ENCODE measurements at regions of chrX and their contacts with region 1.

Region 1: GRCh38 chrX:49291615-49292337 is 11.7 kb upstream of the GAGE10 start:
- DNase-seq: peak; percentile 79
- H3K4me3 Mint-ChIP-seq: no peak overlapping the region
- H3K27ac Mint-ChIP-seq: no peak overlapping the region
- H3K4me1 Mint-ChIP-seq: peaks cover 32% of the 10 kb centered on the region
- H3K27me3 Mint-ChIP-seq: no peaks in the 10 kb centered on the region

Region 2: GRCh38 chrX:49230469-49231232 is 61.1 kb before region 1 on chrX:
- CTCF ChIA-PET with region 1: no interaction called
- POLR2A ChIA-PET with region 1: no interaction called
- intact Hi-C with region 1: no loop called
- DNase-seq: peak; percentile 81
- H3K4me3 Mint-ChIP-seq: peak overlapping the region; percentile 69
- H3K27ac Mint-ChIP-seq: peak overlapping the region; percentile 75
- H3K4me1 Mint-ChIP-seq: peaks cover 14% of the 10 kb centered on the region
- H3K27me3 Mint-ChIP-seq: no peaks in the 10 kb centered on the region

Region 3: DNA sequence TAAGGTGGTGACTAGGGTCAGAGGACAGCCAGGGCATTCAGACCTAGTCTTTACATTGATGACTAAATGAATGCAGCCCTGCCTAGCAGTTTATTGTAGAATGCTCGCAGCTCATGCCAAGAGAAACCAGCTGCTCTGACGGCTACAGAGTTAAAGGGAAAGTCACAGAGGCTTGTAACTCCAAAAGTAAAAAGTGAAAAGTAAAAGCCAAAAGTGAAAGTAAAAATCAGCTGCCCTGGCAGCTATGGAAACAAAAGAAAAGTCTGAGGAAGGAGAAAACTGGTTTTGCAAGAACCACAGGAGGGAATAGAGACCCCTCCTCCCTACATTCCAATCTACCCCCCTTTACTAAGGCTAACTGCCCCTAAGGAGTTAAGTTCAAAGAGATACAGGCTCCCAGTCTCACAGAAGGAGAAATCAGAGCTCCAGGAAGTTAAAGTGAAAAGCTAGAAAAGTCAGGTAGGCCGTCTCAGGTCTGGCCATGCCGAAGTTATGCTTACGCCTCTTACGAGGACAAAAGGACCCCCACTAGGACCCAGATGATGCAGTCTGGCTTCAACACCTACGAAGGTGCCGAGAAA is 17.7 kb after region 1 on chrX:
- CTCF ChIA-PET with region 1: interaction called, 3 read pairs
- POLR2A ChIA-PET with region 1: no interaction called
- intact Hi-C with region 1: loop called (anchors 1 kb)
- DNase-seq: peak; percentile 13
- H3K4me3 Mint-ChIP-seq: peak overlapping the region; percentile 66
- H3K27ac Mint-ChIP-seq: peak overlapping the region; percentile 68
- H3K4me1 Mint-ChIP-seq: peaks cover 21% of the 10 kb centered on the region
- H3K27me3 Mint-ChIP-seq: no peaks in the 10 kb centered on the region

Region 4: GRCh38 chrX:49754233-49754857 is 462.6 kb after region 1 on chrX:
- CTCF ChIA-PET with region 1: interaction called, 12 read pairs
- POLR2A ChIA-PET with region 1: no interaction called
- intact Hi-C with region 1: no loop called
- DNase-seq: peak; percentile 56
- H3K4me3 Mint-ChIP-seq: no peak overlapping the region
- H3K27ac Mint-ChIP-seq: no peak overlapping the region
- H3K4me1 Mint-ChIP-seq: no peaks in the 10 kb centered on the region
- H3K27me3 Mint-ChIP-seq: no peaks in the 10 kb centered on the region

Measured in activated CD4-positive, alpha-beta memory T cell treated with anti-CD3 and anti-CD28 coated beads for 36 hours (primary cell).